A549 (cell line): ENCODE measurements at regions of chr2 and their contacts with region 1.

Region 1: GRCh38 chr2:196259507-196260481 is 88.4 kb upstream of the STK17B start:
- DNase-seq: peak in 1 of 2 experiments; percentile 77
- ATAC-seq: peak; percentile 92 to 95
- H3K4me3 ChIP-seq: no peak overlapping the region
- H3K27ac ChIP-seq: peak overlapping the region; percentile 73 to 78
- H3K4me1 ChIP-seq: peaks cover 28% of the 10 kb centered on the region
- CTCF ChIP-seq: no peak
- EP300 ChIP-seq: peak; percentile 39 to 72; a peak in 2 of 5 replicates
- POLR2A ChIP-seq: no peak
- RAD21 ChIP-seq: peak in 1 of 2 experiments; percentile 12; a peak in 1 of 5 replicates

Region 2: GRCh38 chr2:196076778-196077568 is 182.8 kb before region 1 on chr2:
- CTCF ChIA-PET with region 1: interaction called, 11 read pairs
- POLR2A ChIA-PET with region 1: no interaction called
- DNase-seq: no peak
- ATAC-seq: no peak
- H3K4me3 ChIP-seq: no peak overlapping the region
- H3K27ac ChIP-seq: no peak overlapping the region
- H3K4me1 ChIP-seq: no peaks in the 10 kb centered on the region; the same call in 2 of the 3 replicates
- CTCF ChIP-seq: no peak
- EP300 ChIP-seq: no peak
- POLR2A ChIP-seq: no peak
- RAD21 ChIP-seq: no peak

Region 3: DNA sequence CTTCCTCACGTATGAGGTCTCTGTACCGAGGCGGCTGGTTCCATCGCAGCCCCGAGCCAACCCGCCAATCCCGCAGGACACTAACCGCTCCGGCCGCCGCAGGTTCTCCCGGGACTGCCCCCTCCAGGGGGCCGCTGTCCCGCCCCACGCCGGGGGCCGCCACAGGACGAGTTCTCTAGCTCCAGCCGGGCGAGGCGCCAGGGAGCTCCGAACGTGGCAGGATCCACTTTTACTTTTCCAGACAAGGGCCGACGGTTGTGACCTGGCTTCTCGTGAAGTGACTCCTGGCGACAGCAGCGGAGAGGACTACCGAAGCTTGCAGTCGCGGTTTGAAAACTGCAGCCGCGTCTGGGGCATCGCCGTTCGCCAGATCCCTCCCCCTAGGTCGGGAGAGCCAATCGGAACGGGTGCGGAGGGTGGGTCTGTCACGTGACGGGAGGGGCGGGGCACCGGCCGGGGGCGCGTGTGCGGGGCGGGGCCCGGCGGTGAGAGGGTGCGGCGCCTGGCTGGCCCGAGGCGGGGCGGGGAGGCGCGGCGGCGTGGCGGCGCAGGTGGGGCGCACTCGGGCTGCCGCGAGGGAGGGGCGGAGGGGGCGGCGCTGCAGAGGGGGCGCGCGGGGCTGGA is 88.4 kb before region 1 on chr2 and contains the start of gene STK17B:
- CTCF ChIA-PET with region 1: interaction called, 6 read pairs
- POLR2A ChIA-PET with region 1: interaction called, 11 read pairs
- DNase-seq: peak; percentile 90 to 93
- ATAC-seq: peak; percentile 86 to 91
- H3K4me3 ChIP-seq: peak within 1 kb of the TSS; percentile 90
- H3K27ac ChIP-seq: peak within 1 kb of the TSS; percentile 82 to 91
- H3K4me1 ChIP-seq: peaks cover 32% of the 10 kb centered on the region
- CTCF ChIP-seq: no peak; the same call in 2 of the 3 replicates
- EP300 ChIP-seq: no peak
- POLR2A ChIP-seq: peak; percentile 94
- RAD21 ChIP-seq: no peak
- polyA plus RNA-seq, gene STK17B: 8.6 and 9.2 TPM in 2 replicates

Region 4: GRCh38 chr2:196277002-196277401 is 17.2 kb after region 1 on chr2:
- CTCF ChIA-PET with region 1: interaction called, 7 read pairs
- POLR2A ChIA-PET with region 1: interaction called, 14 read pairs
- DNase-seq: no peak
- ATAC-seq: no peak
- H3K4me3 ChIP-seq: no peak overlapping the region
- H3K27ac ChIP-seq: no peak overlapping the region; a peak in 1 of 6 replicates
- H3K4me1 ChIP-seq: peaks cover 37% of the 10 kb centered on the region
- CTCF ChIP-seq: peak; percentile 48
- EP300 ChIP-seq: no peak
- POLR2A ChIP-seq: no peak
- RAD21 ChIP-seq: peak; percentile 46 to 52; a peak in 4 of 5 replicates